Aorta (tissue), 5 donors: ENCODE measurements at regions of chr6 and their contacts with region 1.

Region 1: GRCh38 chr6:28355743-28356665 is 6.3 kb downstream of the ZKSCAN3 start:
- DNase-seq: peak; percentile 75 to 81
- ATAC-seq: peak; percentile 92
- H3K4me3 ChIP-seq: peak overlapping the region; percentile 48 to 75
- H3K27ac ChIP-seq: peak overlapping the region in 1 of 2 donors; percentile 82
- H3K4me1 ChIP-seq: no peaks in the 10 kb centered on the region
- H3K27me3 ChIP-seq: no peaks in the 10 kb centered on the region

Region 2: DNA sequence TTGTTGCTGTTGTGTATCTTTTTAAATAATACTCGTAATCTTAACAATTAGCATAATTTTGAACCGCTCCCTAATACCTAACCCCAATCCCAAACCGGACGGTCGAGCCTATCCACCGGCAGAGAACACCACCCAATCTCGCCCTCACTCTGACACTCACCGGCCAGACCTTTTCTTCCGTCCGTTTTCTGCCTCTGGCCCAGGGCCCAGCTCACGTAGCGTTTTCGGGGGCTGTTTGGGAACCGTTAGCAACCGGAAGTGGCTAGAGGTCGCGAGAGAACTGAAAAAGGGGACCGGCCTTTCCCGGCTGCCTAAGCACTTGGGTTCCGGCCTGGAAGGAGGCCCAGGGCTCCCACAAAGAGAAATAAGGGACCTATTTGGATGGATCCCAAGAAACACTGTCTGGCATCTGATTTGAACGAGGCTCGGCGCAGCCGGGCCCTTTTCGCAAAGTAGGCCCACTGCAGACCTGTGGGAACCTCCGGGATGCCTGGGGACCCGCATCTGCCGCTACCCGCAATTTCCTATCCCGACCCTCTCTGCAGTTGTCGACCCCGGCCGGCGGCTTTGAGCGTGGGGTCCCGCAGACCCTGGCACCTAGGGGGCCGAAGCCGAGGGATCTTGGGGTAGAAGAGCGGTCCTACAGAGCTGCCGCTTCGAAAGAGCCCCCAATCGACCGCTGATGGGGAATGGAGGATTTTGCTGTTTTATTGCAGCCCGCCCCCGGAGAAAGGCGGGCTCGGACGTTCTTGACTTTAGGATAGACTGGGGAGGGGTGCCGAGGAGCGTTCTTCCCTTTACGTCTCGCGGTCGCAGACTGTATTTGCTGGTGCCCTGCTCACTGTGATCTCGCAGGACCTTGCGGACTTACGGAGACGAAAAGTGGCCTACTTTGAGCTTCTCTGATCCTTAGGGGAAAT is 219.2 kb before region 1 on chr6:
- intact Hi-C with region 1: loop called (anchors 2 to 5 kb)
- DNase-seq: peak; percentile 94 to 96
- ATAC-seq: peak; percentile 94
- H3K4me3 ChIP-seq: peak overlapping the region; percentile 88 to 91
- H3K27ac ChIP-seq: peak overlapping the region; percentile 91 to 99
- H3K4me1 ChIP-seq: no peaks in the 10 kb centered on the region
- H3K27me3 ChIP-seq: no peaks in the 10 kb centered on the region

Region 3: DNA sequence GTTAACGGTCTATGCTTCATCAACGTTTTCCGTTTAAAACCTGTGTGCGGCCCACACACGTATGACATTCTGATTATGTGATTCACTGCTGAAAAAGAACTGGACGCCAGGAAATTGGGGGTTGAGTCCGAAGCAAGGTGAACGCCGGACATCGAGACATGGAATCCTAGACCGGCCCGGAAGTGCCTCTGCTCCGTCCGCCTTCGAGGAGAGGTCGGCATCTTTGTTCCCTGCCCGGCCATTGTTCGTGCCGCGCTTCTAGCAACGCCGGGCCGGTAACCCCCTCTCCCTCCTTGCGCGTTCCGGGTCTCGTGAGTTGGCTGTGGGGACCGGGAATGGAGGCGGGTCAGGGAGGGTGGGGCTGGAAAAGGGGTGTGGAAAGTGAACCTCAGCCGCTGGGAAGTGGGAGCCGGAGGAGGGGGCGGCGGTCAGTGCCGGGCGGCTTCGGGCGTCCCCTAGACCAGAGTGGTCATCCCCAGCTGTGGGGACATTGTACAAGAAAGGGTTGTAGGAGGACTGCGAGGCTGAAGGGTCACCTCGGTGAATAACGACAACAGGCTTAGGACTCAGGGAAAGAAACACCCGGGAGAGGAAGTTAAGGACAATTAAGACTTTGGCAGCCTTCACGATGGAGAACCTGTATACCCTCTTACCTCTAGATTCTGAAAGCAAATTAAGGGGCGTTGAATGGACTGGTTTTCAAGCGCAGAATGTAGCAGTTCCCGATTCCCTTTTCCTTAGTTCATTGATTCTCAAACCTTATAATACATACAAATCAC is 130.8 kb before region 1 on chr6 and contains the start of gene ZSCAN9:
- intact Hi-C with region 1: loop called (anchors 2 to 5 kb)
- DNase-seq: peak; percentile 90 to 95
- ATAC-seq: peak; percentile 96
- H3K4me3 ChIP-seq: peak within 1 kb of the TSS; percentile 12 to 89
- H3K27ac ChIP-seq: peak within 1 kb of the TSS in 1 of 2 donors; percentile 3
- H3K4me1 ChIP-seq: peaks cover 2 to 3% of the 10 kb centered on the region in 2 donors
- H3K27me3 ChIP-seq: no peaks in the 10 kb centered on the region
- total RNA-seq, gene ZSCAN9: 15.4 to 18.5 TPM

Region 4: GRCh38 chr6:28252009-28252975 is 103.7 kb before region 1 on chr6 and contains the start of gene ZKSCAN4:
- intact Hi-C with region 1: loop called (anchors 10 kb)
- DNase-seq: peak; percentile 84 to 85
- ATAC-seq: peak; percentile 95
- H3K4me3 ChIP-seq: peak within 1 kb of the TSS; percentile 87 to 98
- H3K27ac ChIP-seq: no peak within 1 kb of the TSS
- H3K4me1 ChIP-seq: no peaks in the 10 kb centered on the region
- H3K27me3 ChIP-seq: no peaks in the 10 kb centered on the region
- total RNA-seq, gene ZKSCAN4: 4.0 to 6.8 TPM

Region 5: DNA sequence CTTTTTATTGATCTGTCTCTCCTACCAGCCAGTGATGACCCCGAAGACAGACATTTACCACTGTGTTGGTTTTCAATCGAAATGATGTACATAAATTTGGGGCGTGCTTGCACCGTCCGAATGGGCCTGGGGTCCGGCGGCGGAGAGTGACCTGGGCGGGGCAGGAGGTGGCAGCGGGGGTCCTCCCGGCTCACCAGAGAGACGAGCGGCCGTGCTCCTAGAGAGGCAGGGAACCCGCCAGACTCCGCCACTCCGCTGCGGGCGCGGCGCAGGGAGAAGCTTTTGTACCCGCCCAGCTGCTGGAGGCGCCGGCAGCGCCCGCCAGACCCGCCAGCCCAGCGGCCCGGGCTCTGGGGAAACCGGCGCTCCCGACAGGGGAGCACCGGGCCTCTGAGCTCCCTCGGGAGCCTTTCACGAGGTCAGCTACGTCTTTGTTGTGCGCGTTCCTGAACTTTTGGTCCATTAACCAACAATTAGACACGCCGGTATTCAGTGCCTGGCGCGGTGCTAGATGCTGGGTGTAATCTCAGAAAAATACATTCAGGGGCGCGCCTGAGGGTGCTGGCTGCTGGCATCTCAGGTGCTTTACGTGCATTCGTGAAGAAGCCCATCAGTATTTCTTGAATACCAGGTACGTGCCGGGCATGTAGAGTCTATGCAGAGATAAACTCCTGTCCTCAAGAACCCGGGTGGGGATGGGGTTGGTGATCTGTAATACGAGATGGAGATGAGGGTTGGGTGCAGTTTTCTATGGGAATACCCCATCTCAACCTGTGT is 74.5 kb before region 1 on chr6 and contains the start of gene PGBD1:
- intact Hi-C with region 1: loop called in 1 of 2 experiments (anchors 5 kb)
- DNase-seq: peak; percentile 86 to 93
- ATAC-seq: peak; percentile 90
- H3K4me3 ChIP-seq: peak within 1 kb of the TSS; percentile 53 to 85
- H3K27ac ChIP-seq: no peak within 1 kb of the TSS
- H3K4me1 ChIP-seq: peaks cover 0 to 2% of the 10 kb centered on the region in 2 donors
- H3K27me3 ChIP-seq: no peaks in the 10 kb centered on the region
- total RNA-seq, gene PGBD1: 6.2 to 6.7 TPM

Region 6: DNA sequence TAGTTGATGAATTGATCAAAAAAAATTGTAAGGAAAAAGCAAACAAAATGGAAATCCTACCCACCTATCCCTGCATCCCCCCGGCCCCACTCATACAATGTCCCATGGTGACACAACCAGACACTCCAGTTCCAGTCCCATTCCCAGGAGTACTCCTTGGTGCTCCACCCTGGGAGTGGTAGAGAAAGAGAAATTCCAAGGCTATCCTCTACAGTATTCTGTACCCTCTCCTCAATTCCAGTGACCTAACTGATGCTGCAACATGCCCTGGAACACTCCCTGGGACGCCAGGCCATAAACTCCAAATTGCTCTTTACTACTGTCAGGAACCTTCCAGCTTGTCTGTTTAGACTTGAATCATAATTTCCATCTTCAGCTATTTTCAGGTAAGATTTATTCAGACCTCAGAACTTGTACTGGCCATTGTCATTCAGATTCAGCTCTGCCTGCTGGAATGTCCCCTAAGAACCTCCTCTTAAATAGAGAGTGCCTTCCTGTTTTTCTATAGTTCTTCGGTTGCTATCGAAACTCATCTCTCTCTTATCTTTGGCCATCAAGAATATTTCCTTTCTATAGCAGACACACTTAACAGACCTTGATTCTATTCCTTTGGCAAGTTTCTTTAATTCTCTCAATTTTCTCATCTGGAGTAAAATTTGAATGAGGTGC is 150.9 kb after region 1 on chr6:
- intact Hi-C with region 1: no loop called
- DNase-seq: no peak
- ATAC-seq: no peak
- H3K4me3 ChIP-seq: no peak overlapping the region
- H3K27ac ChIP-seq: no peak overlapping the region
- H3K4me1 ChIP-seq: no peaks in the 10 kb centered on the region
- H3K27me3 ChIP-seq: no peaks in the 10 kb centered on the region